CD8-positive, alpha-beta T cell (primary cell): ENCODE measurements at regions of chr19 and their contacts with region 1.

Region 1: GRCh38 chr19:55712804-55713631 is 25.2 kb downstream of the NLRP9 start:
- DNase-seq: no peak
- ATAC-seq: no peak
- H3K4me3 ChIP-seq: no peak overlapping the region
- H3K4me3 Mint-ChIP-seq: no peak overlapping the region
- H3K27ac ChIP-seq: no peak overlapping the region
- H3K27ac Mint-ChIP-seq: no peak overlapping the region
- H3K4me1 ChIP-seq: no peaks in the 10 kb centered on the region
- H3K4me1 Mint-ChIP-seq: no peaks in the 10 kb centered on the region
- H3K27me3 ChIP-seq: peaks cover 0 to 2% of the 10 kb centered on the region in 2 experiments
- H3K27me3 Mint-ChIP-seq: peaks cover 17% of the 10 kb centered on the region
- CTCF ChIP-seq: no peak

Region 2: GRCh38 chr19:55700813-55701212 is 12.2 kb before region 1 on chr19:
- CTCF ChIA-PET with region 1: no interaction called
- POLR2A ChIA-PET with region 1: no interaction called
- intact Hi-C with region 1: loop called in 1 of 2 experiments (anchors 1 kb)
- DNase-seq: no peak
- ATAC-seq: no peak
- H3K4me3 ChIP-seq: no peak overlapping the region
- H3K4me3 Mint-ChIP-seq: no peak overlapping the region
- H3K27ac ChIP-seq: no peak overlapping the region
- H3K27ac Mint-ChIP-seq: no peak overlapping the region
- H3K4me1 ChIP-seq: no peaks in the 10 kb centered on the region
- H3K4me1 Mint-ChIP-seq: peaks cover 2% of the 10 kb centered on the region
- H3K27me3 ChIP-seq: no peaks in the 10 kb centered on the region
- H3K27me3 Mint-ChIP-seq: no peaks in the 10 kb centered on the region
- CTCF ChIP-seq: no peak